ENCODE measurements at regions of chr10 and their contacts with region 1.

Region 1: GRCh38 chr10:72303424-72304128 is 29.9 kb downstream of the DDIT4 start:
- DNase-seq: no peak
- ATAC-seq: no peak
- H3K4me3 ChIP-seq: no peak overlapping the region
- H3K27ac ChIP-seq: no peak overlapping the region
- H3K4me1 ChIP-seq: peaks cover 6% of the 10 kb centered on the region
- H3K27me3 ChIP-seq: no peaks in the 10 kb centered on the region
- CTCF ChIP-seq: no peak

Region 2: GRCh38 chr10:72215652-72216549 is 87.7 kb before region 1 on chr10 and contains the starts of genes ANAPC16 and ASCC1:
- CTCF ChIA-PET with region 1: no interaction called
- POLR2A ChIA-PET with region 1: interaction called, 21 read pairs
- intact Hi-C with region 1: no loop called
- DNase-seq: peak; percentile 88
- ATAC-seq: peak; percentile 85
- H3K4me3 ChIP-seq: peak within 1 kb of the TSS; percentile 98
- H3K27ac ChIP-seq: peak within 1 kb of the TSS; percentile 96
- H3K4me1 ChIP-seq: peaks cover 19% of the 10 kb centered on the region; the same call in 1 of the 2 replicates
- H3K27me3 ChIP-seq: no peaks in the 10 kb centered on the region
- CTCF ChIP-seq: no peak
- total RNA-seq, gene ANAPC16: 19.2 and 23.9 TPM in 2 replicates
- total RNA-seq, gene ASCC1: 15.7 and 24.3 TPM in 2 replicates